Heart right ventricle (tissue), 16 donors: ENCODE measurements at regions of chr4 and their contacts with region 1.

Region 1: DNA sequence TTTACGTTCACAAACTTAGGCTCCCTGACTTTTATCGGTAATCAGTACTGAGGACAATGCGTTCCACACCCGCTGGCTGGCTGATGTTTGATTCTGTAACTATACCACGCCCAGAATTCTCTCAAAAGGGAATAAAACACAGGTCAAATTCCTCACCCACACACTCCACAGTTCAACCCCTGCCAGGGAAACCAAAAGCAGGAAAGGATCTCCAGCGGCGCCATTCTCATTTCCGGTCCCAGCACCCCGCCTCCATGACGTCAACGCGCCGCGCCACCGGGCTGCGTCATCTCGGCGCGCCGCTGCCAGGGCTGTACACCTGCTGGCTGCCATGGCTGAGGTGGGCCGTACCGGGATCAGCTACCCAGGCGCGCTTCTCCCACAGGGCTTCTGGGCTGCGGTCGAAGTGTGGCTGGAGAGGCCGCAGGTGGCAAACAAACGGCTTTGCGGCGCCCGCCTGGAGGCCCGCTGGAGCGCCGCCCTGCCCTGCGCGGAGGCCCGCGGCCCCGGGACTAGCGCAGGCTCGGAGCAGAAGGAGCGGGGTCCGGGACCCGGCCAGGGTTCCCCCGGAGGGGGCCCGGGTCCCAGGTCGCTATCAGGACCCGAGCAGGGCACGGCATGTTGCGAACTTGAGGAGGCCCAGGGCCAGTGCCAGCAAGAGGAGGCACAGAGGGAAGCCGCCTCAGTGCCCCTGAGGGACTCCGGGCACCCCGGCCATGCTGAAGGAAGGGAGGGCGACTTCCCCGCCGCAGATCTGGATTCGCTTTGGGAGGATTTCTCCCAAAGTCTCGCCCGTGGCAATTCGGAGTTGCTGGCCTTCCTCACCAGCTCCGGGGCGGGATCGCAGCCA is at the starts of genes ACOX3 and TRMT44:
- DNase-seq: peak; percentile 91 to 92
- ATAC-seq: peak; percentile 93 to 97 (median 95)
- H3K4me3 ChIP-seq: peak within 1 kb of the TSS; percentile 79 to 99 (median 96)
- H3K27ac ChIP-seq: peak within 1 kb of the TSS; percentile 88 to 97 (median 94)
- H3K4me1 ChIP-seq: peaks cover 29 to 89% (median 67%) of the 10 kb centered on the region in 9 donors
- H3K27me3 ChIP-seq: no peaks in the 10 kb centered on the region
- CTCF ChIP-seq: no peak
- total RNA-seq, gene ACOX3: 21.6 to 28.9 (median 25.6) TPM
- total RNA-seq, gene TRMT44: 6.0 to 10.2 (median 8.4) TPM

Region 2: GRCh38 chr4:7569810-7570773 is 870.6 kb before region 1 on chr4:
- intact Hi-C with region 1: no loop called
- DNase-seq: no peak
- ATAC-seq: no peak
- H3K4me3 ChIP-seq: no peak overlapping the region
- H3K27ac ChIP-seq: no peak overlapping the region
- H3K4me1 ChIP-seq: no peaks in the 10 kb centered on the region
- H3K27me3 ChIP-seq: peaks cover 0 to 4% (median 0%) of the 10 kb centered on the region in 7 donors
- CTCF ChIP-seq: no peak

Region 3: GRCh38 chr4:8428293-8429097 is 12.2 kb before region 1 on chr4:
- intact Hi-C with region 1: loop called in 1 of 10 experiments (anchors 1 kb)
- DNase-seq: peak; percentile 86 to 93
- ATAC-seq: peak; percentile 97 to 98 (median 98)
- H3K4me3 ChIP-seq: peak overlapping the region; percentile 62 to 99 (median 84)
- H3K27ac ChIP-seq: peak overlapping the region; percentile 67 to 94 (median 91)
- H3K4me1 ChIP-seq: peaks cover 0 to 61% (median 42%) of the 10 kb centered on the region in 9 donors
- H3K27me3 ChIP-seq: no peaks in the 10 kb centered on the region
- CTCF ChIP-seq: peak in 1 of 9 donors; percentile 10